ENCODE measurements at regions of chr16 and their contacts with region 1.

Region 1: GRCh38 chr16:27235055-27235937 is 32.0 kb downstream of the KDM8 start:
- DNase-seq: peak; percentile 85
- ATAC-seq: peak; percentile 89
- H3K4me3 ChIP-seq: no peak overlapping the region
- H3K27ac ChIP-seq: peak overlapping the region; percentile 78
- H3K4me1 ChIP-seq: peaks cover 18% of the 10 kb centered on the region
- H3K27me3 ChIP-seq: no peaks in the 10 kb centered on the region
- CTCF ChIP-seq: peak; percentile 92
- POLR2A ChIP-seq: no peak
- RAD21 ChIP-seq: peak; percentile 92

Region 2: GRCh38 chr16:27154705-27155521 is 80.4 kb before region 1 on chr16:
- CTCF ChIA-PET with region 1: no interaction called
- POLR2A ChIA-PET with region 1: no interaction called
- dilution Hi-C with region 1: no loop called
- in situ Hi-C with region 1: no loop called
- intact Hi-C with region 1: loop called (anchors 2 kb)
- DNase-seq: peak; percentile 21
- ATAC-seq: peak; percentile 94
- H3K4me3 ChIP-seq: no peak overlapping the region
- H3K27ac ChIP-seq: no peak overlapping the region
- H3K4me1 ChIP-seq: 0 out of 2 replicates have a peak, but pooled peaks cover 1% of the 10 kb centered on the region
- H3K27me3 ChIP-seq: no peaks in the 10 kb centered on the region
- CTCF ChIP-seq: peak; percentile 88
- POLR2A ChIP-seq: no peak
- RAD21 ChIP-seq: peak; percentile 77

Region 3: DNA sequence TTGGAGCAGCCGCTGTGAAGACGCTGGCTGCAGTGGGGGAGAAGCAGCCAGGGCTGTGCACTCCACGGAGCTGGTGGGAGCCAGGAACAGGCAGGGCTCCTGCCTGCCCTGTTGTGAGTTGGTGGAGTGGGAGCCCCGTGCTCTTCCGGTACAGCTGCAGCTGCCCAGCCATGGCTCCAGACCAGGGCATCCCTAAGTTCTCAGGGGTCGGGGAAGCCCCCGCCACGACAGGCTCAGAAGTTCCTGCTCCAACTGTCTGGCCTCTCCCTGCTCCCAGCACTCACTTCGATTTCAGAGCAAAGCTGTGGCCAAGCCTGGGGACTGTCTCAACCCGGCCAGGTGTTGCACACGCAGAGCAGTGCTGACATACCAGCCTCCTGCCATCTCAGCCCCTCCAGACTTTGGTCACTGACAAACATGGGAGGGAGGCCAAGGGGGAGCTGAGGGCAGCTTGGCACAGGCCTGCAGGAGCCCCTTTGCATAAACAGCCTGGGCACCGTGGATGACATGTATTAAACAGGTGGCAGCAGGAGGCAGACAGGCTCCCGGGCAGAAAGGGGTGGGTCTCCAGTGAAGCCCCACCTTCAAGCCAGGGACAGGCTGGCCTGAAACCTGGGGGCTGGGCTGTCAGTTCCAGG is 45.8 kb before region 1 on chr16:
- CTCF ChIA-PET with region 1: no interaction called
- POLR2A ChIA-PET with region 1: no interaction called
- dilution Hi-C with region 1: no loop called
- in situ Hi-C with region 1: no loop called
- intact Hi-C with region 1: no loop called
- DNase-seq: no peak
- ATAC-seq: no peak
- H3K4me3 ChIP-seq: no peak overlapping the region
- H3K27ac ChIP-seq: no peak overlapping the region
- H3K4me1 ChIP-seq: no peaks in the 10 kb centered on the region
- H3K27me3 ChIP-seq: peaks cover 15% of the 10 kb centered on the region
- CTCF ChIP-seq: no peak
- POLR2A ChIP-seq: no peak
- RAD21 ChIP-seq: no peak

Region 4: GRCh38 chr16:27330542-27330941 is 95.2 kb after region 1 on chr16:
- CTCF ChIA-PET with region 1: interaction called, 6 read pairs
- POLR2A ChIA-PET with region 1: no interaction called
- dilution Hi-C with region 1: no loop called
- in situ Hi-C with region 1: no loop called
- intact Hi-C with region 1: loop called (anchors 1 kb)
- DNase-seq: peak; percentile 98
- ATAC-seq: peak; percentile 72
- H3K4me3 ChIP-seq: no peak overlapping the region
- H3K27ac ChIP-seq: peak overlapping the region; percentile 93
- H3K4me1 ChIP-seq: peaks cover 38% of the 10 kb centered on the region
- H3K27me3 ChIP-seq: no peaks in the 10 kb centered on the region
- CTCF ChIP-seq: no peak
- POLR2A ChIP-seq: peak; percentile 65
- RAD21 ChIP-seq: peak; percentile 5; the same call in 1 of the 2 replicates

Region 5: DNA sequence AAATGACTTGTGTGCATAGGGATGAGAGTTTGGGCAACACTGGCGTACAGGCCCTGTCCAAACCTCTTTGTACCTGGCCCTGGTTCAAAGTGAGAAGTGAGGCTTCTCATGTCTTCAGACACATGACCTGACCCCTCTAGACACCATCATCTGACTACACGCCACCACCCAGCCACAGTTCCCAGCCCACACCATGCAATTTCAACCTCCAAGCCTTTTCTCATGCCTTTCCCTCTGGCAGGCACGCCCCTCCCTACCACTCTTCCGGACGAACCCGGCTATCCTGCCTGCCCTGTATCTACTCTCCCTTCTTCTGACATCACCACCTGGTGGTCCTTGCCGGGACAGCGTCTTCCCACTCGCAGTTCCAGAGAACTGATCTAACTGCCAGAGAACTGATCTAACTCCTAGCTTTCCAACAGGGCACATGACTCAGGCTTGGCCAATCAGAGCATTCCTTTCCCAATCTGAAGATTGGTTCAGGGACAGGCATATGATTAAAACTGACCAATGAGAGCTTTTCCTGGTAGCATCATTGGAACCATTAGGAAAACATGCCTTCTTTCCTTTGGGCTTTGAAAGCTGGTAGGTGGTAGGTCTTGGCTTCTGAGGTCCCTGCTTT is 139.6 kb after region 1 on chr16:
- CTCF ChIA-PET with region 1: interaction called, 3 read pairs
- POLR2A ChIA-PET with region 1: no interaction called
- dilution Hi-C with region 1: no loop called
- in situ Hi-C with region 1: loop called (anchors 5 kb)
- intact Hi-C with region 1: no loop called
- DNase-seq: peak; percentile 80
- ATAC-seq: peak; percentile 93
- H3K4me3 ChIP-seq: no peak overlapping the region
- H3K27ac ChIP-seq: no peak overlapping the region
- H3K4me1 ChIP-seq: peaks cover 11% of the 10 kb centered on the region
- H3K27me3 ChIP-seq: no peaks in the 10 kb centered on the region
- CTCF ChIP-seq: peak; percentile 59
- POLR2A ChIP-seq: no peak
- RAD21 ChIP-seq: peak; percentile 62

Region 6: DNA sequence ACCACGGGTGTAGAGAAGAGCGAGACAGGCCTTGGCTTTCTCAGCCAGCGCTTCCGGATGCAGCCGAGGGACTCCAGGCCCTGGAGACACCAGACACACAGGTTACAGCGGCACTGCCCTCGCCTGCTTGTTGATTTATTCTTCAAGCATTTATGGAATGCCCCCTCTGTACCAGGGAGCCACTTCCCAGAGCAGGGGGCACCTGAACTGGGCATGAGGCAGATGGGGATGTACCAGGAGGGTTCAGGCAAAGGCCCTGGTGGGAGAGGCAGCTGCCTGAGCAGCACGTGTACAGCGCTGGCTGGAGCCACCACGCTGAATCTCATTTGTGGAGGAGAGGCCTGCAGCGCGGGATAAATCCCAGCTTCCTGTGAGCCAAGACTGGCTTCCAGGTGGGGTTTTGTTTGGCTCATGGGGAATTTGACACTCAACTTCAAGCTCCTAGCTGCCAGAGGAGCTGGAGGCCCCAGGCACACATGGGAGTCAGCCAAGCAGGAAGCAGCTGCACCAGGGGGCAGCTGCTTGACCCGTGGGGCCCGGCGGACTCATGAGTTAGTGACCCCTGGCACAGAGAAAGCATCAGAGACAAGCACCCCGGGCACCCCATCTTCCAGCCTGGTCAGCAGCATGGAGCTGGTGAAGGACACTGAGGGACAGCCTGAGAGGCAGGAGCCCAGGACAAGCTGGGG is 226.3 kb after region 1 on chr16:
- CTCF ChIA-PET with region 1: interaction called, 3 read pairs
- POLR2A ChIA-PET with region 1: no interaction called
- dilution Hi-C with region 1: no loop called
- in situ Hi-C with region 1: no loop called
- intact Hi-C with region 1: loop called (anchors 1 kb)
- DNase-seq: peak; percentile 54
- ATAC-seq: peak; percentile 9; the same call in 1 of the 2 replicates
- H3K4me3 ChIP-seq: no peak overlapping the region
- H3K27ac ChIP-seq: no peak overlapping the region
- H3K4me1 ChIP-seq: peaks cover 4% of the 10 kb centered on the region
- H3K27me3 ChIP-seq: no peaks in the 10 kb centered on the region
- CTCF ChIP-seq: no peak
- POLR2A ChIP-seq: no peak
- RAD21 ChIP-seq: no peak